ENCODE measurements at regions of chr17 and their contacts with region 1.

Region 1: DNA sequence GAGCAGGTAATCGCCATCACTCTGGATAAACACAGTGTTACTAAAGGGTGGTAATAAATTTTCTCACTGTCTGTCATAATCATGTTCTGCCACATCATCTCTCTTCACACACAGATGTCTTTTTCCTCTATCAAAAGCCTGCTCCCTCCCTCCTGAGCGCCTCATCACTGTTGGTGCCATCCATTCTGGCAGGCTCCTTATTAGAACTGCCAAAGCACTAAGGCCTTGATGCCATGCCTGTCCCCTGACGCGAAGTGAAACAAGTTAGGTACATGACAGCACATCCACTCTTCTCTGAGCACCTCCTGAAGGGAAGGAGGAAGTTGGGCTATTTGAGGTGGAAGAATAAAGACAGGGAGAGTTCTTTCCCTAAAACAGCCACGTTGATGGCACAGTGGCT is 38.2 kb upstream of the AXIN2 start:
- DNase-seq: no peak
- H3K4me3 ChIP-seq: no peak overlapping the region
- H3K27ac ChIP-seq: no peak overlapping the region
- H3K4me1 ChIP-seq: peaks cover 0 to 1% (median under 1%) of the 10 kb centered on the region in 4 donors
- H3K27me3 ChIP-seq: no peaks in the 10 kb centered on the region
- CTCF ChIP-seq: no peak
- EP300 ChIP-seq: no peak
- POLR2A ChIP-seq: no peak

Region 2: GRCh38 chr17:65398040-65398787 is 201.4 kb before region 1 on chr17:
- in situ Hi-C with region 1: no loop called
- intact Hi-C with region 1: loop called (anchors 2 kb)
- DNase-seq: no peak
- H3K4me3 ChIP-seq: no peak overlapping the region
- H3K27ac ChIP-seq: no peak overlapping the region
- H3K4me1 ChIP-seq: no peaks in the 10 kb centered on the region
- H3K27me3 ChIP-seq: no peaks in the 10 kb centered on the region
- CTCF ChIP-seq: no peak
- EP300 ChIP-seq: no peak
- POLR2A ChIP-seq: no peak

Region 3: GRCh38 chr17:65514082-65514481 is 85.6 kb before region 1 on chr17:
- in situ Hi-C with region 1: no loop called
- intact Hi-C with region 1: no loop called
- DNase-seq: no peak
- H3K4me3 ChIP-seq: no peak overlapping the region
- H3K27ac ChIP-seq: no peak overlapping the region
- H3K4me1 ChIP-seq: peaks cover 5 to 15% (median 11%) of the 10 kb centered on the region in 4 donors
- H3K27me3 ChIP-seq: no peaks in the 10 kb centered on the region
- CTCF ChIP-seq: no peak
- EP300 ChIP-seq: no peak
- POLR2A ChIP-seq: no peak

Region 4: GRCh38 chr17:65824901-65825300 is 225.3 kb after region 1 on chr17:
- in situ Hi-C with region 1: no loop called
- intact Hi-C with region 1: no loop called
- DNase-seq: no peak
- H3K4me3 ChIP-seq: no peak overlapping the region
- H3K27ac ChIP-seq: no peak overlapping the region
- H3K4me1 ChIP-seq: peaks cover 0 to 10% (median 0%) of the 10 kb centered on the region in 4 donors
- H3K27me3 ChIP-seq: no peaks in the 10 kb centered on the region
- CTCF ChIP-seq: no peak
- EP300 ChIP-seq: no peak
- POLR2A ChIP-seq: no peak